Endothelial cell of umbilical vein (primary cell): ENCODE measurements at regions of chr1 and their contacts with region 1.

Region 1: DNA sequence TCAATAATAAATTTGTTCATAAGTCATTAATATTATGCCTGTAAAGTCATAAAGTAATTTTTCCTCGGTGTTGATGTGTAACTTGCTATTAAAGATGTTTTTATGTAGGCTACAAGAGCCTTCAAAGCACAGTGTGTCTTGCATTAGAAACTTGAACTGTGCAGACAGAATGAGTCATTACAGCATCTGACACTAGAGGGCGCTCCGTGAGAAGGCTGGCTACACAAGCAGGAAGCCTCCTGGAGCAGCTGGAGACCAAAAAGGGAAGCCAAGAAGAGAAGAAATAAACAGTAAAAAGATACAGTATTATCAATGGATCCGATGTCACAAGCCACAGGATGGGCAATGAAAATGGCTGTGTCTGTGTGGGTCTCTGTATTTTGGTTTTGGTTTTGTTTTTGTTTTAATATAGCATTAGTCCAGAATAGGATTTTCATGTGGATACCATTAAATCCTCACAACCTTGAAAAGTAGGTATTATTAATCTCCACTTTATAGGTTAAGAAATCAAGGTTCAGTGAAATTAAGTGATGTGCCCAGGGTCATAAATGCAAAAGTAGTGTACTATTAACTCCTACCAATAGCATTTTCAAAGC is 16.1 kb upstream of the LRRC8D start:
- DNase-seq: peak; percentile 89
- H3K4me3 ChIP-seq: no peak overlapping the region
- H3K27ac ChIP-seq: no peak overlapping the region
- H3K4me1 ChIP-seq: peaks cover 2% of the 10 kb centered on the region
- H3K27me3 ChIP-seq: peaks cover 0 to 2% of the 10 kb centered on the region in 2 experiments
- CTCF ChIP-seq: peak; percentile 78 to 86
- POLR2A ChIP-seq: no peak

Region 2: GRCh38 chr1:89552471-89553081 is 252.2 kb before region 1 on chr1:
- CTCF ChIA-PET with region 1: no interaction called
- POLR2A ChIA-PET with region 1: no interaction called
- dilution Hi-C with region 1: no loop called
- intact Hi-C with region 1: no loop called
- DNase-seq: peak; percentile 51
- H3K4me3 ChIP-seq: no peak overlapping the region
- H3K27ac ChIP-seq: no peak overlapping the region
- H3K4me1 ChIP-seq: peaks cover 9% of the 10 kb centered on the region
- H3K27me3 ChIP-seq: no peaks in the 10 kb centered on the region
- CTCF ChIP-seq: no peak
- POLR2A ChIP-seq: no peak

Region 3: GRCh38 chr1:89820422-89821321 is 15.9 kb after region 1 on chr1 and contains the start of gene LRRC8D:
- CTCF ChIA-PET with region 1: interaction called, 11 read pairs
- POLR2A ChIA-PET with region 1: no interaction called
- dilution Hi-C with region 1: no loop called
- intact Hi-C with region 1: no loop called
- DNase-seq: peak; percentile 85
- H3K4me3 ChIP-seq: peak within 1 kb of the TSS; percentile 70 to 94 (median 74)
- H3K27ac ChIP-seq: no peak within 1 kb of the TSS
- H3K4me1 ChIP-seq: peaks cover 11% of the 10 kb centered on the region
- H3K27me3 ChIP-seq: peaks cover 0 to 1% of the 10 kb centered on the region in 2 experiments
- CTCF ChIP-seq: no peak
- POLR2A ChIP-seq: peak; percentile 17
- total RNA-seq, gene LRRC8D: 23.6 and 37.7 TPM in 2 replicates

Region 4: DNA sequence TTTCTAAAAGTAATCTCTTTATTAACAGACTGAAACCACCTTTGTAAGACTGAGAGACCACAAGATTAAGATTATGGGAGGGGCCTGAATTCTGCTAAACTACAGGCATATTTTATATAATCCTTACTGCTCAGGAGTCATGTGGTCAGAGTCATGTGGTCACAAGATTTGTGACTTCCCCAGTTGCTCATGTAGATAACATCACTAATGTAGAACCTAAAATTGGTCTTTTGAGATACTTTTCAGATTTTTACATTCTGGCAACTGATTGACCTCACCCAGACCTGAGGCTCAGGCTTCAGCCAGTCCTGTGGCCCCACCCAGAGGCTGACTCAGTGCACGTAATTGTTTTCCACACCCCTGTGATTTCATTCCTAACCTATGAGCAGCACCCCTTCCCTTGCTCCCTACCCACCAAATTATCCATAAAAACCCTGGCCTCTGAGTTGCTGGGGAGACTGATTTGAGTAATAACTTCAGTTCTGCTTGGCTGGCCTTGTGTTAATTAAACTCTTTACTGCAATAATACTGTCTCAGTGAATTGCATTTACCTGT is 148.4 kb after region 1 on chr1:
- CTCF ChIA-PET with region 1: interaction called, 11 read pairs
- POLR2A ChIA-PET with region 1: no interaction called
- dilution Hi-C with region 1: no loop called
- intact Hi-C with region 1: loop called (anchors 1 kb)
- DNase-seq: peak; percentile 42
- H3K4me3 ChIP-seq: no peak overlapping the region
- H3K27ac ChIP-seq: no peak overlapping the region
- H3K4me1 ChIP-seq: peaks cover 5% of the 10 kb centered on the region
- H3K27me3 ChIP-seq: no peaks in the 10 kb centered on the region
- CTCF ChIP-seq: peak; percentile 24 to 29
- POLR2A ChIP-seq: no peak

Region 5: DNA sequence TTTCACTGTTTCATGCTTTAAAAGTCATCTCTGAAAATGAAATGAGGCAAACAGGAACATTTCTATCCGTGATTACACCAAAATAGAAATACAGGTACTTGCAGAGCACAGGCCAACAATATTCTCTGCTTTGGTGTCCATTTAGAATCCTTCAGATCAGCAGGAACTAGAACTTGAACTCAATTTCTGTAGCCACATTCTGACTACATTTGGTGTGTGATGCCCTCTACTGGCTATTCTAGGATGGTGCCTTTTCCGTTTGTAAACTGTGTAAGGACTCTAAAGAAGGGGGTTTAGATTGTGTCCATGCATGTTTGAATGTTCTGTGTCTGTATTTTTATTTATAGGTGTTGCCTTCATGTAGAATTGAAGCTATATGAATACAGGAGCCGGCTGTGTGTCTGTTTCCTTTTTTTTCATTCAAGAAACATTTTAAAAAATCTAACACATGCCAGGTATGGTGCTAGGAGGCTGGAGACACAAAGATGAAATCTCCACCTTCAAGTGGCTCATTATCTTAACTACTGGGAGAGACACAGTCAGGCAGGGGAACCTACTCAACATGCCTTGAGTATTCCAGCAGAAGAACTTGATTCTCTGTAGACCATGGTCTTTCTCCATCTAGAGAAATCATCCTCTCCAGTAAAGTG is 182.6 kb after region 1 on chr1:
- CTCF ChIA-PET with region 1: interaction called, 30 read pairs
- POLR2A ChIA-PET with region 1: no interaction called
- dilution Hi-C with region 1: no loop called
- intact Hi-C with region 1: loop called (anchors 1 kb)
- DNase-seq: peak; percentile 82
- H3K4me3 ChIP-seq: no peak overlapping the region
- H3K27ac ChIP-seq: no peak overlapping the region
- H3K4me1 ChIP-seq: no peaks in the 10 kb centered on the region
- H3K27me3 ChIP-seq: peaks cover 0 to 2% of the 10 kb centered on the region in 2 experiments
- CTCF ChIP-seq: peak; percentile 66 to 68
- POLR2A ChIP-seq: no peak

Region 6: DNA sequence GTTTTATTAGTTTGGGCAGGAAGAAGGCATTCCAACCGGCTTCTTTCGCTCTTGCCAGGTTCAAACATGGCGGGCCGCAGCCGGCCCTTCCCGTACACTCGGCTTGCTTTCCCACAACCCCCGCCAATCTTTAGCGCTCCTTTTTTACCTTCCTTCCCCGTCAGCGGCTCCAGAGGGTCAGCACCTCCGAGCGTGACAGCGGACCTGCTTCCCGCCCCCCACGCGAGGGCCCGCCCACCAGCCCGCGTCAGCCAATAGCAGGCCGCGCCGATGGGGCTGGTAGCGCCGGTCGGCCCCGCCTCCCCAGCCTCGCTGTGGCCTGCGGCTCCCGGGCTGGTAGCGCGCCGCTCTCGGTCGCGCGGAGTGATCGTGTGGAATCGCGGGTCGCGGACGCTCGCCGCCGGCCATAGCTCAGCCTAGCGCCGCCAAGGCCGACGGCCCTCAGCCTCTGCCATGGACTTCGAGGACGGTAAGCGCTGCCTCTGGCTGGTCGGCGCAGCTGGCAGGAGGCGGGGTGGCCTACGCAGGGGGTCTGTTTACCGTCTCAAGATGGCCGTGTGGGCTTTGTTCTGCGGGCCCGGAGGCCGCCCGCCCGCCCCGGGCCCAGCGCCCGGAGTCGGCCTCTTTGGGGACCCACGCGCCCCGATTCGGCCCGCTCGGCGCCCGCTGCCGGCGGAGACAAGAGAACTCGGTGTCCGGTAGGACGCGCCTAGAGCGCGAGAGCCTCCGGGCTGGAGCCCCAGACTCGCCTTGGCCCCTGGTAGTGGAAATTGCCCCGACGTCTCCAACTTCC is 190.3 kb after region 1 on chr1 and contains the start of gene ZNF326:
- CTCF ChIA-PET with region 1: interaction called, 22 read pairs
- POLR2A ChIA-PET with region 1: no interaction called
- dilution Hi-C with region 1: no loop called
- intact Hi-C with region 1: loop called (anchors 2 kb)
- DNase-seq: peak; percentile 98
- H3K4me3 ChIP-seq: peak within 1 kb of the TSS; percentile 89 to 99 (median 98)
- H3K27ac ChIP-seq: peak within 1 kb of the TSS; percentile 94
- H3K4me1 ChIP-seq: peaks cover 19% of the 10 kb centered on the region
- H3K27me3 ChIP-seq: no peaks in the 10 kb centered on the region
- CTCF ChIP-seq: no peak
- POLR2A ChIP-seq: peak; percentile 98
- total RNA-seq, gene ZNF326: 29.7 and 29.9 TPM in 2 replicates